Heart left ventricle (tissue), 16 donors: ENCODE measurements at regions of chr13 and their contacts with region 1.

Region 1: DNA sequence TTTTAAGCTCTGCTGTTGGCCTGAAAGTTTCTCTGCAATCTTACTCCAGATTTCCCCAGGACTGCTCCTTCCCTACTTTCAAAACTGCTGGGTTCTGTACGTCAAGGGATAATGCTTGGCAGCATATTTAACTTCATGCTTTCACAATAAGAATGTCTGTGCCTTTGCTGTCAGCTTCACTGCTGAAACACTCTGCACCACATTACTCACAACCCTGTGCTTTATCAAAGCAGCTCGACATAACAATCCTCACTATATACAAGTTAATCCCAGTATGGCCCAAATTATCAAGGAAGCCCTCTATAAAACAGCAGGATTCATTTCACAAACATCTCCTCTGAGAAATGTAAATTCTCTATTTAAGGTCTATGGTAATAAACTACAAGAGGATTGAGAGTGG is 17.5 kb downstream of the LATS2 start:
- DNase-seq: no peak
- ATAC-seq: peak; percentile 57 to 88 (median 75)
- H3K4me3 ChIP-seq: peak overlapping the region in 2 of 12 donors; percentile 20 to 33
- H3K27ac ChIP-seq: peak overlapping the region in 11 of 12 donors; percentile 4 to 77 (median 51)
- H3K4me1 ChIP-seq: peaks cover 0 to 94% (median 78%) of the 10 kb centered on the region in 12 donors
- H3K27me3 ChIP-seq: no peaks in the 10 kb centered on the region
- CTCF ChIP-seq: no peak
- POLR2A ChIP-seq: no peak

Region 2: GRCh38 chr13:20891768-20892167 is 152.1 kb before region 1 on chr13:
- intact Hi-C with region 1: no loop called
- DNase-seq: no peak
- ATAC-seq: no peak
- H3K4me3 ChIP-seq: no peak overlapping the region
- H3K27ac ChIP-seq: no peak overlapping the region
- H3K4me1 ChIP-seq: peaks cover 0 to 5% (median 0%) of the 10 kb centered on the region in 12 donors
- H3K27me3 ChIP-seq: no peaks in the 10 kb centered on the region
- CTCF ChIP-seq: no peak
- POLR2A ChIP-seq: no peak

Region 3: DNA sequence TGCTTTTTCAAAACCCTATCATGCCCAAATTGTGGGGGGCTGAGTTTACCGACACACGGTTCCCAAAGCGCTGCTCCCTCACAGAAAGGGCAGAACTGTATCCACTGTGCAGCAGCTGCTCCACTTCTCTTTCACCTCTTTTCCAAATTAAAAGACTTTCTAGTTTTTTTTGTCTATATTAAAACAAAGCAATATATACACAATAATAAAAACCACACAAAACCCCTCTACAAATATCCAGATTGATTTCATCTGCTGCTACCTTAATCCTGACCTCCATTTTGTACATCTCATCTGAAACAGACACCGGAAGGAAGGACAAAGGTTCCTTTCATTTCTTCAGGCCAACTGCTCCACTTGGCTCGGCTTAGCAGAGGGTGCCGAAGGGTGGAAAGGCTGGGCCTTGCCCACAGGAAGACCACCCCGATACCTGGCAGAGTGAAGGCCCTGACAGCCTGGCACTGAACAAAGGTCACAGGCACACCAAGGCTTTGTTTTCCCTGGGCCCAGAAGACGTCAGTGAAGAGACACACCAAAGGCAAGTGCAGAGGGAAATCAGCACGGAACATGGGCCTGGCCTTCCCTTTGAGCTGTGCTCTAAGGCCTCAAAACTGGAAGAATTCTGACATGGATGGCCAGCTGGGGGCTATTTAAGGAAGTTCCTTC is 54.1 kb before region 1 on chr13:
- intact Hi-C with region 1: loop called in 1 of 10 experiments (anchors 10 kb)
- DNase-seq: no peak
- ATAC-seq: peak in 2 of 4 donors; percentile 10 to 21
- H3K4me3 ChIP-seq: no peak overlapping the region
- H3K27ac ChIP-seq: peak overlapping the region in 5 of 12 donors; percentile 2 to 58 (median 49)
- H3K4me1 ChIP-seq: peaks cover 0 to 30% (median 3%) of the 10 kb centered on the region in 12 donors
- H3K27me3 ChIP-seq: no peaks in the 10 kb centered on the region
- CTCF ChIP-seq: no peak
- POLR2A ChIP-seq: no peak

Region 4: GRCh38 chr13:21001471-21001870 is 42.4 kb before region 1 on chr13:
- intact Hi-C with region 1: loop called in 1 of 10 experiments (anchors 5 kb)
- DNase-seq: no peak
- ATAC-seq: no peak
- H3K4me3 ChIP-seq: no peak overlapping the region
- H3K27ac ChIP-seq: no peak overlapping the region
- H3K4me1 ChIP-seq: peaks cover 0 to 53% (median 41%) of the 10 kb centered on the region in 12 donors
- H3K27me3 ChIP-seq: no peaks in the 10 kb centered on the region
- CTCF ChIP-seq: no peak
- POLR2A ChIP-seq: no peak